ENCODE measurements at regions of chr22 and their contacts with region 1.

Region 1: DNA sequence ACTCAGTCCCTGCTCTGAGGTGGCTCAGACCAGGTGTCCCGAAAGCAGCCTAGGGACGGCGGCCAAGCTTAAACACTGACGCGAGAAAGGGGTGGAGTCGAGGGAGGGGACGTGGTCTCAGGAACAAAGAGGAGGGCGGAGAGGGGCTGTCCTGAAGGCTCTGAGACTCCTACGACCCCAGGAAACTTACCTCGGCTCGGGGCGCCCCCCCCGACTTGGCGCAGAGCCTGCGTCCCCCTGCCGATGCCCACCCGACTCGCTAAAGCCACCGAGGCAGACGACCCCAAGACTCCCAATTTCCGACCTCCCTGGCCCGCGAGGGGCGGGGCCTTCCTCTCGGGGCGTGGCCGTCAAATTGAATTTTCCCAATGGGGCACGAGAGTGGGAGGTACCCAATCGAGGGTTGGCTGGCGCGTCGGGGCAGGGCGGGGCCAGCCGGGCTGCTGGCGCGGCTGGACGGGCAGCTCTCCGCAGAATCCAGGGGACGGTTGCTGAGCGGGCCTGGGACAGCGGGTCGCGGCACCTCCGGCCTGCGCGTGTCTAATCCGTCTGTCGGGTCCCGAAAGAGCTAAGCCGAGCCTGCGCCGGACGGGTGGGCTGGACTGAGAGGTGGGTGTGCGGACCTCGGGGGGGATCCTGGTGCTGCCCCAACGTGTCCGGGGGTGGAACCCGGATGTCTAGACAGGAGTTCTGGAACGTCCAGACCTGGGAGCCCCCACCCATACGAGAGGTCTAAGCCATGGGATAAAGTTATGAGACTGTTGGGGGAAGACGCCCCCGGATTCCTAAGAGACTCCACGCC is at the start of gene SMTN:
- DNase-seq: no peak
- H3K4me3 ChIP-seq: peak within 1 kb of the TSS; percentile 64 to 90
- H3K27ac ChIP-seq: peak within 1 kb of the TSS; percentile 97
- H3K4me1 ChIP-seq: peaks cover 53% of the 10 kb centered on the region
- H3K27me3 ChIP-seq: no peaks in the 10 kb centered on the region
- CTCF ChIP-seq: no peak
- POLR2A ChIP-seq: peak; percentile 32 to 99
- total RNA-seq, gene SMTN: 199 TPM

Region 2: DNA sequence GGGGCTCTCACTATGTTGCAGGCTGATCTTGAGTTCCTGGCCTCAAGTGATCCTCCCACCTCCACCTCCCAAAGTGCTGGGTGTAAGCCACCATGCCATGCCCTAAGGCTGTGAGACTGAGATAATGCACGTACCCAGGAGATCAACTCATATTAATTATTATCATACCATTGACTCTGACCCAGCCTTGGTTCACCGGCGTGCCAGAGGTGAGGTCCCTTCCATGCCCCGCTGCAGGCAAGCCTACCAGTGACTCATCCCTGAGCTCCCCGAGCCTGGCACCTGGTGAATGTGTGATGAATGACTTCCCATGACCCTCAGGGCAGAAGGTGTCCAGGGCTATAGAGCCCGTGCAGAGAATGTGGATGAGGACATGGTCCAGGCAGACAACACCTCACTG is 518.7 kb before region 1 on chr22:
- intact Hi-C with region 1: no loop called
- DNase-seq: no peak
- H3K4me3 ChIP-seq: no peak overlapping the region
- H3K27ac ChIP-seq: no peak overlapping the region
- H3K4me1 ChIP-seq: no peaks in the 10 kb centered on the region
- H3K27me3 ChIP-seq: no peaks in the 10 kb centered on the region
- CTCF ChIP-seq: no peak
- POLR2A ChIP-seq: no peak

Region 3: DNA sequence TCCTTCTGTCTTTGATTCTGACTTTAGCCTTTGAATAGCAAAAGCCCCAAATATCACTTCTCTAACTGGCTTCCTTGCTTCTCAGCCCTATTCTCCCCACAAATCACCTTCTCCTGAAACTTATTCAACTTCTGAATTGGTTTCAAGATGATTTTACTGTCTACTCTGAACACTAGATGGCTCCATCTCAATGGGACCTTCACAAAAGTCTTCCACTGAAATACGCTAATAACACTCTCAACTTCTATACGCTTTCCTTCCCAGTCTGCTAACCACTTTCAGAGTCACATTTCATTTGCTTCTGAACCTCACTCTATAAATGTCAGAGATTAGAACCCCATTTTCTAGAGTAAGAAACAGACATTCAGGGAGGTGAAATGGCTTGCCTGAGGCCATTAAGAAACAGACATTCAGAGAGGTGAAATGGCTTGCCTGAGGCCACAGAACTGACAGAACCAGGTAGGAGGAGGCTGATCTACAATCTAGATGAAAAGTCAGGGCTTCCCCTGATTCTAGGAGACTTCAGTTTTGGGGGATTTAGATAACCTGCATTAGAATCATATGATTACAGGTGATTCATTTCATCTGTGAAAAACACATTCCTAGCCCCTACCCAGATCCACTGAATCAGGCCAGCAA is 133.1 kb before region 1 on chr22:
- intact Hi-C with region 1: loop called (anchors 2 kb)
- DNase-seq: no peak
- H3K4me3 ChIP-seq: no peak overlapping the region
- H3K27ac ChIP-seq: peak overlapping the region; percentile 64
- H3K4me1 ChIP-seq: peaks cover 32% of the 10 kb centered on the region
- H3K27me3 ChIP-seq: no peaks in the 10 kb centered on the region
- CTCF ChIP-seq: peak in 1 of 3 experiments; percentile 67
- POLR2A ChIP-seq: no peak

Region 4: GRCh38 chr22:30968924-30969539 is 112.0 kb before region 1 on chr22 and contains the start of gene TUG1:
- intact Hi-C with region 1: loop called (anchors 1 kb)
- DNase-seq: peak; percentile 98 to 99
- H3K4me3 ChIP-seq: peak within 1 kb of the TSS; percentile 73 to 93
- H3K27ac ChIP-seq: peak within 1 kb of the TSS; percentile 94
- H3K4me1 ChIP-seq: peaks cover 48% of the 10 kb centered on the region
- H3K27me3 ChIP-seq: no peaks in the 10 kb centered on the region
- CTCF ChIP-seq: no peak
- POLR2A ChIP-seq: peak in 1 of 2 donors; percentile 84
- total RNA-seq, gene TUG1: 85.0 TPM

Region 5: GRCh38 chr22:31044262-31044861 is 36.7 kb before region 1 on chr22:
- intact Hi-C with region 1: loop called (anchors 5 kb)
- DNase-seq: no peak
- H3K4me3 ChIP-seq: peak overlapping the region in 1 of 2 donors; percentile 18
- H3K27ac ChIP-seq: peak overlapping the region; percentile 73
- H3K4me1 ChIP-seq: peaks cover 42% of the 10 kb centered on the region
- H3K27me3 ChIP-seq: no peaks in the 10 kb centered on the region
- CTCF ChIP-seq: no peak
- POLR2A ChIP-seq: no peak

Measured in vagina (tissue), 2 donors.